Endothelial cell of umbilical vein (primary cell): ENCODE measurements at regions of chr1 and their contacts with region 1.

Region 1: GRCh38 chr1:12568009-12568767 is 49.8 kb downstream of the DHRS3 start:
- DNase-seq: no peak
- H3K4me3 ChIP-seq: no peak overlapping the region
- H3K27ac ChIP-seq: no peak overlapping the region
- H3K4me1 ChIP-seq: no peaks in the 10 kb centered on the region
- H3K27me3 ChIP-seq: no peaks in the 10 kb centered on the region
- CTCF ChIP-seq: no peak
- POLR2A ChIP-seq: no peak

Region 2: GRCh38 chr1:12604114-12604874 is 36.1 kb after region 1 on chr1:
- CTCF ChIA-PET with region 1: no interaction called
- POLR2A ChIA-PET with region 1: interaction called, 12 read pairs
- dilution Hi-C with region 1: no loop called
- intact Hi-C with region 1: no loop called
- DNase-seq: peak; percentile 99
- H3K4me3 ChIP-seq: peak overlapping the region in 1 of 3 experiments; percentile 15
- H3K27ac ChIP-seq: peak overlapping the region; percentile 95
- H3K4me1 ChIP-seq: peaks cover 38% of the 10 kb centered on the region
- H3K27me3 ChIP-seq: no peaks in the 10 kb centered on the region
- CTCF ChIP-seq: no peak
- POLR2A ChIP-seq: peak; percentile 38

Region 3: GRCh38 chr1:12711536-12711935 is 143.3 kb after region 1 on chr1:
- CTCF ChIA-PET with region 1: no interaction called
- POLR2A ChIA-PET with region 1: no interaction called
- dilution Hi-C with region 1: no loop called
- intact Hi-C with region 1: no loop called
- DNase-seq: no peak
- H3K4me3 ChIP-seq: no peak overlapping the region
- H3K27ac ChIP-seq: no peak overlapping the region
- H3K4me1 ChIP-seq: no peaks in the 10 kb centered on the region
- H3K27me3 ChIP-seq: no peaks in the 10 kb centered on the region
- CTCF ChIP-seq: no peak
- POLR2A ChIP-seq: no peak